ENCODE measurements at regions of chr4 and their contacts with region 1.

Region 1: DNA sequence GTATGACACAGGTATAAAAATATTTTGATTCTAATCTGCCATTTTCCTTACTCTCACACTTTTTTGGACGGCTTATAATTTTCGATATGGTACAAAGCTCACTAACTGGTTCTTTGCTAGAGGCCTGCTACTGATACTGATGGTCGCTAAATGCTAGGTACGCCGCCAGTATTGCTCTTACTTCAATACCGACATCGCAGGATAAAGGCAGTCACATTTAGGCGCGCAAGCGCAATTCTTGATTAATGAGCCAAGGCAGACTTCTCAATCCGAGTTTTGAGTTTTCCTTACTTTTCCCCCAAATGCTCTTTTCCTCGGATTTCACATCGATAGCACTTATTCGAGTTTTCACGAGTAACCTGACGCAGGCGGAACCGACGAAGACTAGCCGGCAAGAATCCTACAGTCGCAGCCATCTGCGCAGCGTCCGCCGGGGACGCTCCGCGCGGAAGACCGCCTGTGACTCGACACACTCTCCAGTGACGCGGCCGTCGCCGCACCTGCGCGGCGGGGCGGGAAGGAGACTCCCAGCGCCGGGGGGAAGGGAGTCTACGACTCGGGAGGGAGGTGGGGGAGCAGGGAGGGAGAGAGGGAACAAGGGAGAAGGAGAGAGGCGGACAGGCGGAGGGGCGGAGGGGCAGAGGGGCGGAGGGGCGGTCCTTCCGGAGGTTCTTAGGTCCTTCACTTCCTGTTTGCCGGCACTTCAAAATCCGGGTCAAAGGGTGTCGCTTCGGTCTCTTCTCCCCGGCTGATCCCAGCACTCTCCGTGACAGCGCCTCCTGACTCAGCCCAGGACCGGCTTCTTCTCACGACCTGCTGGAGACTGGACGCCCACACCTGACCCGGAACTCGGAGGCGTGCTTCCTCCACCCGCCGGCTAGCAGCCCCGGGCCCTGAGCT is at the start of gene USP38:
- H3K4me3 Mint-ChIP-seq: peak within 1 kb of the TSS; percentile 99
- H3K27ac Mint-ChIP-seq: peak within 1 kb of the TSS; percentile 87
- H3K4me1 Mint-ChIP-seq: peaks cover 38% of the 10 kb centered on the region
- H3K27me3 Mint-ChIP-seq: no peaks in the 10 kb centered on the region

Region 2: DNA sequence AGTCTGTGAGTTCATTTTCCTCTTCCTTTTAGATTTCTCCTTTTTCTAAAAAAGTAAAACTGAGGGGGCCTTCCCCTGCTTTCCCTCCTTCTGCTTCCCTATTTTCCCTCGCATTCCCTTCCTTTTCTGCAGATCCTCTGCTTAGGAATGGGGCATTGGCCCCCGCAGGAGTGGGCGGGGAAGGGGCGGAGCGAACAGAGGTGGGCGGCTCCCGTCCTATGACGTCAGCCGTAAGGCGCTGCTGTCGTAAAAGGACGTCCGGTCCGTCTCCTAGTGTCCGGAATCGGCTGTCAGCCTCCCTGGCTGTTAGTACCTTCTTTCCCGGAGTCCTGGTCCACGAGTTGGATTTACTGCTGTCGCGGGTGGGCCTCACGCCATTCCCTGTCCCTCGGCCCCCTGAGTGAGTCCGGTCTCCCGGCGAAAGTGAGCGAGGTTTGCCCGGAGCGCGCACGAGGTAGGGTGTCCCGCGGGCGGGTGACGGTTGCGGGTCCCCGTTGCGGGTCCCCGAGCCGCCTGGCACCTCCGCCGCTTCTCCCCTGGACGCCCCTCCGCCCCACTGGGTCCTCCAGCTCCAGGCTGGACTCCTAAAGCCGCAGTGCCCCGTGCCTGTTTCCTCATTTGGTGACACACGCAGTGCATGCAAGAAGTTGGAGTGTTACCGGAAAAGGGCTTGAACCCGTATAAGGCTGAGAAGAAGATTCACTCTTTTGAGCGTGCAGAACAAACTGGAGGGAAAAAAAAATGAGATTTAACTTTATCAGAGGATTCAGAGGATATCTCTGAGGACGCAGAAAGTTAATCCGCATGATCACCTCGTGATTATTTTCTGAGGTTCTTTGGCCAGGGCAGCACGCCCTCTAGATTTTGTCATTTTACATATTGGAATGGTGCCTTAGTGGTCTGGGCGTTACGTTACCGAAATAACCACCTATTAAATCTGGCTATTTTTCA is 1963.5 kb before region 1 on chr4 and contains the start of gene ZNF330:
- intact Hi-C with region 1: loop called (anchors 10 kb)
- H3K4me3 Mint-ChIP-seq: peak within 1 kb of the TSS; percentile 93
- H3K27ac Mint-ChIP-seq: peak within 1 kb of the TSS; percentile 97
- H3K4me1 Mint-ChIP-seq: peaks cover 23% of the 10 kb centered on the region
- H3K27me3 Mint-ChIP-seq: no peaks in the 10 kb centered on the region

Region 3: DNA sequence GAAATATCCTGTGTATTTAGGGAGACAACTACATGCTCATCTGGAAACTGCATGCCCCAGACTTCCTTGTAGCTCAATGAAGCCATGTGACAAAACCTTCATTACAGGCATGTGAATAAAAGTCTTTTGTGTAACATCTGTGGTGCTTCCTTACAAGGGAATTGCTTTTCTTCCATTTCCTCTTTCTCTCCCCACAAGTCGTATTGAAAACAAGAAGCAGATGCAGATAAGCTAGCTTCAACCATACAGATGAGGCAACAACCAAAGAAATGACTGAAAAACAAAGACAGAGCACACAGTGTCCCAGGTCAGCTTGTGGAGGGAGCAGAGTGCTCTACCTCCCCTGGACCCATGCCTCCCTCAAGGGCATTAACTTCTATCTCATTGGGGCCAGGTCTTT is 222.6 kb before region 1 on chr4:
- intact Hi-C with region 1: loop called (anchors 10 kb)
- H3K4me3 Mint-ChIP-seq: no peak overlapping the region
- H3K27ac Mint-ChIP-seq: peak overlapping the region; percentile 82
- H3K4me1 Mint-ChIP-seq: peaks cover 36% of the 10 kb centered on the region
- H3K27me3 Mint-ChIP-seq: no peaks in the 10 kb centered on the region

Region 4: GRCh38 chr4:143335979-143336780 is 151.7 kb after region 1 on chr4:
- intact Hi-C with region 1: loop called (anchors 1 kb)
- H3K4me3 Mint-ChIP-seq: peak overlapping the region; percentile 93
- H3K27ac Mint-ChIP-seq: peak overlapping the region; percentile 91
- H3K4me1 Mint-ChIP-seq: peaks cover 31% of the 10 kb centered on the region
- H3K27me3 Mint-ChIP-seq: peaks cover 4% of the 10 kb centered on the region

Region 5: DNA sequence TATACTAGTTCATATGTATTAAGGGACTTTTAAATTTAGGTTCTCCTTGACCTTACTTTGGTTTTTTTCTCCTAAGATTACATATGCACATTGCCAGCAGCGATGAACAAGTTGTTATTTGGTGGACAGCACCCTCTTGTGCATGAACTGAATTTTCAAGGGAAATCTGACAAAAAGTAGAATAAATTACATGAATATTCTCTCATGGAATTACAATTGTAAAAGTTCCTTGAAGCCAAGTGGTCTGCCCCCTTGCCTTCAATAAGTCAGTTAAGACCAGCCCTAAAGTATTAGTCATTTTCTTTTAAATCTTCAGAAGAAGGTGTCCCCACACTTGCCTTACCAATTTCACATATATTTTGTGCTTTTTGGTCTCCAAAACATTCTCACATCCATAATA is 298.4 kb after region 1 on chr4:
- intact Hi-C with region 1: no loop called
- H3K4me3 Mint-ChIP-seq: no peak overlapping the region
- H3K27ac Mint-ChIP-seq: no peak overlapping the region
- H3K4me1 Mint-ChIP-seq: no peaks in the 10 kb centered on the region
- H3K27me3 Mint-ChIP-seq: no peaks in the 10 kb centered on the region

Region 6: GRCh38 chr4:143513306-143514168 is 329.1 kb after region 1 on chr4 and contains the start of gene SMARCA5:
- intact Hi-C with region 1: loop called (anchors 1 kb)
- H3K4me3 Mint-ChIP-seq: peak within 1 kb of the TSS; percentile 91
- H3K27ac Mint-ChIP-seq: peak within 1 kb of the TSS; percentile 99
- H3K4me1 Mint-ChIP-seq: peaks cover 22% of the 10 kb centered on the region
- H3K27me3 Mint-ChIP-seq: peaks cover 1% of the 10 kb centered on the region